Uterus (tissue), 4 donors: ENCODE measurements at regions of chr6 and their contacts with region 1.

Region 1: DNA sequence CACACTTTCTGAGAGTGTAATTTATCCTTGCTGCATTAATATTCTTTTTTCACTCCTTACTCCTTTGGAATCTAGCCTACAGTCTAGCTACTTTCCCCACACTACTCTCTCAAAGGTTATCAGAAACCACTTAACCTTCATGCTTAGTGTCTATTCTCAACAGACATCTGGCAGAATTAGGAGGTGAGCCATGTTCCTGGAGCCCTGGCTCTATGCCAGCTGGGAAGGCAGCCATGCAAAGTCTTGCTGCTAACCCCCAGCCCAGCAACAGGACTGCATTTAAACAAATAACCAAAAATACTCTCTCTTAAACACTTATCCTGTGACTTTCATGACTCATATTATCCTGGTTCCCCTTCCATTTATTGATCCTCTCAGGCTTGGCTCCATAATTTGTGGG is 260.2 kb downstream of the BCKDHB start:
- DNase-seq: peak in 1 of 2 donors; percentile 49
- H3K4me3 ChIP-seq: no peak overlapping the region
- H3K27ac ChIP-seq: no peak overlapping the region
- H3K4me1 ChIP-seq: no peaks in the 10 kb centered on the region
- H3K27me3 ChIP-seq: no peaks in the 10 kb centered on the region
- CTCF ChIP-seq: no peak
- POLR2A ChIP-seq: no peak

Region 2: DNA sequence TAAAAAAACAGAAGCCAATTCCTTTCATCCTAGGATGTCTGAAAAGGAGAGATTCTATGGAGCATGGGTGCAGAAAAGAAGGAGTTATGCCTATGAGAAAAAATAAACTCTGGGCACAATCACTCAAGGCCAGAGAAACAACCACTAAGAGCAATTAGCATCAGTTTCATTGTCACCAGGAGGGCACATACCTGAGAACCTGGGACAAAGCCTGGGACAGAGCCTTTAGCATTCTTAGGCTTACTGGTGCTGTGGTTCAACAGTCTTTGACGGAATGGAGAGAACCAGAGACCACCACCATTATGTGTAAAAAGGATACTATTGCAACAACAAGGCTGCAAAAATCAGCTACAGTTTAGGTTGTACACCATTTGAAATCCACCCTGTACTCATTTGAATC is 289.6 kb before region 1 on chr6:
- intact Hi-C with region 1: no loop called
- DNase-seq: no peak
- H3K4me3 ChIP-seq: no peak overlapping the region
- H3K27ac ChIP-seq: no peak overlapping the region
- H3K4me1 ChIP-seq: no peaks in the 10 kb centered on the region
- H3K27me3 ChIP-seq: no peaks in the 10 kb centered on the region
- CTCF ChIP-seq: no peak
- POLR2A ChIP-seq: no peak

Region 3: GRCh38 chr6:80341330-80341729 is 25.4 kb before region 1 on chr6:
- intact Hi-C with region 1: loop called (anchors 2 kb)
- DNase-seq: no peak
- H3K4me3 ChIP-seq: no peak overlapping the region
- H3K27ac ChIP-seq: no peak overlapping the region
- H3K4me1 ChIP-seq: no peaks in the 10 kb centered on the region
- H3K27me3 ChIP-seq: no peaks in the 10 kb centered on the region
- CTCF ChIP-seq: no peak
- POLR2A ChIP-seq: no peak

Region 4: GRCh38 chr6:80457439-80457933 is 90.8 kb after region 1 on chr6:
- intact Hi-C with region 1: no loop called
- DNase-seq: peak; percentile 54 to 73
- H3K4me3 ChIP-seq: no peak overlapping the region
- H3K27ac ChIP-seq: no peak overlapping the region
- H3K4me1 ChIP-seq: no peaks in the 10 kb centered on the region
- H3K27me3 ChIP-seq: no peaks in the 10 kb centered on the region
- CTCF ChIP-seq: no peak
- POLR2A ChIP-seq: no peak